ENCODE measurements at regions of chr11 and their contacts with region 1.

Region 1: DNA sequence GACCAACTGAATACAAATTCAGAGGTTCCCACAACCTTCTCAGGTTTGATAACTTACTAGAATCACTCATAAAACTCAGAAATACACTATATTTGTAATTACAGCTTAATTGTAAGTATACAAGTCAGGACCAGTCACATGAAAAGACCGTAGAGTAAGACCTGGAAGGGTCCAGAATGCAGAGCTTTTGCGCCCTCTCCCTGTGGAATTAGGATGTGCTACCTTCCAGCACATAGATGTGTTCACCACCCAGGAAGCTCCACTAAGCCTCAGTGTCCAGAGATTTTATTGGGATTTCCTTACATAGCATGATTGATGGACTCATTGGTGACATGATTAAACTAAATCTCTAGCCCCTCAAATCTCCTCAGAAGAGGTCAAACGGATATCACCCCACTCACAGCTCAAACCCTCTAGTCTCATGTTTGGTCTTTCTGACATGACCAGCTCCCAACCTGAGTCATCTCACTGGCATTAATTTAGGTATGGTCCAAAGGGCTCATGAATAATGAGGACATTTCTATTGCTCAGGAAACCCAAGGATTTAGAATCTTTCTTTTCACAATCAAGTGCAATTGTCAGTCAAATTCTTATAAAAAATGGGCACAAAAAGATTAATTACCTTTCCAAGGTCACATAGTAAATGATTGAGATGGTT is 77.2 kb upstream of the UBASH3B start:
- DNase-seq: no peak
- H3K4me3 Mint-ChIP-seq: no peak overlapping the region
- H3K27ac Mint-ChIP-seq: no peak overlapping the region
- H3K4me1 Mint-ChIP-seq: peaks cover 12% of the 10 kb centered on the region
- H3K27me3 Mint-ChIP-seq: peaks cover 7% of the 10 kb centered on the region

Region 2: GRCh38 chr11:122440811-122441617 is 137.3 kb before region 1 on chr11:
- intact Hi-C with region 1: no loop called
- DNase-seq: no peak
- H3K4me3 Mint-ChIP-seq: no peak overlapping the region
- H3K27ac Mint-ChIP-seq: no peak overlapping the region
- H3K4me1 Mint-ChIP-seq: no peaks in the 10 kb centered on the region
- H3K27me3 Mint-ChIP-seq: peaks cover 7% of the 10 kb centered on the region

Region 3: GRCh38 chr11:122628810-122629555 is 50.7 kb after region 1 on chr11:
- intact Hi-C with region 1: loop called (anchors 1 kb)
- DNase-seq: peak; percentile 34
- H3K4me3 Mint-ChIP-seq: no peak overlapping the region
- H3K27ac Mint-ChIP-seq: no peak overlapping the region
- H3K4me1 Mint-ChIP-seq: peaks cover 4% of the 10 kb centered on the region
- H3K27me3 Mint-ChIP-seq: peaks cover 5% of the 10 kb centered on the region

Measured in activated T-helper 1 cell treated with anti-CD3 and anti-CD28 coated beads, Interleukin-12 subunit alpha, Interleukin-12 subunit beta, Interleukin-2, Interleukin-4 antibody, amounts not matched to agents 30 ng/mL and 10 ng/mL and 1 ng/mL, durations not matched to agents 14 hours and 24 hours and 36 hours (primary cell).